ENCODE measurements at regions of chr4 and their contacts with region 1.

Region 1: GRCh38 chr4:159175085-159175988 is 72.5 kb downstream of the RAPGEF2 start:
- DNase-seq: peak; percentile 49 to 88 (median 63)
- ATAC-seq: peak; percentile 93
- H3K4me3 ChIP-seq: no peak overlapping the region
- H3K27ac ChIP-seq: no peak overlapping the region; the same call in 2 of the 3 replicates
- H3K4me1 ChIP-seq: peaks cover 3 to 23% of the 10 kb centered on the region in 2 experiments; a peak in 3 of 5 replicates
- H3K27me3 ChIP-seq: no peaks in the 10 kb centered on the region
- CTCF ChIP-seq: peak; percentile 78 to 86 (median 80)
- EP300 ChIP-seq: peak; percentile 24
- POLR2A ChIP-seq: no peak
- RAD21 ChIP-seq: peak; percentile 87 to 88

Region 2: DNA sequence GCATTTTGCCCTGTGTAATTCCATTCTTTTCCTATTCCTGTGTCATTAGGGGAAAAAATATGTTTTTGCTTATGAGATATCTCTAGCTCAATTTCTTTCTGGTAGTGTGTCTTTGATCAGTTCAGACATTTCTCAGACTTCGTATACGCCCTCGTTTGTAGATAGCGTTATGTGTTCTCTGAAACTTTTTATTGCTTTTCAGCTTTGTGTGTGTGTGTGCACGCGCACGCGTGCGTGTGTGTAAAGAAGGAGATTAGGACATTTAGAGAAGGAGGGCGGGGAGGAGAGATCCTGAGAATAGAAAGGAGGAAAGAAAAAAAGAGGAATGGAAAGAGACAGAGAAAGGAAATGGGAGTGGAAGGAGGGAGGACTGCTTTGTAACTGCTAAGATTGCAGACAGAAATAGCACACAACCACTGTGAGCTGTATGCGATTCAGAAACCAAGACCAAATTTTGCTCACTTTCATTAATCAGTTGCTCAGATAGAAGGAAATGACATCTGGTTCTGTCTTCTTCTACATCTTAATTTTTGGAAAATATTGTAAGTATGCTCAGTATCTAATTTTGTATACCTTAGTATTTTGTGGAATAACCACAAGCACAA is 653.8 kb before region 1 on chr4 and contains the start of gene RXFP1:
- CTCF ChIA-PET with region 1: no interaction called
- POLR2A ChIA-PET with region 1: no interaction called
- in situ Hi-C with region 1: no loop called
- intact Hi-C with region 1: no loop called
- DNase-seq: no peak
- ATAC-seq: peak; percentile 39; the same call in 1 of the 3 replicates
- H3K4me3 ChIP-seq: no peak within 1 kb of the TSS
- H3K27ac ChIP-seq: no peak within 1 kb of the TSS
- H3K4me1 ChIP-seq: no peaks in the 10 kb centered on the region; a peak in 2 of 5 replicates
- H3K27me3 ChIP-seq: no peaks in the 10 kb centered on the region; a peak in 1 of 5 replicates
- CTCF ChIP-seq: no peak
- EP300 ChIP-seq: no peak
- POLR2A ChIP-seq: no peak
- RAD21 ChIP-seq: no peak
- polyA plus RNA-seq, gene RXFP1: 0.03 TPM in 1 of 2 experiments, not detected in the other

Region 3: DNA sequence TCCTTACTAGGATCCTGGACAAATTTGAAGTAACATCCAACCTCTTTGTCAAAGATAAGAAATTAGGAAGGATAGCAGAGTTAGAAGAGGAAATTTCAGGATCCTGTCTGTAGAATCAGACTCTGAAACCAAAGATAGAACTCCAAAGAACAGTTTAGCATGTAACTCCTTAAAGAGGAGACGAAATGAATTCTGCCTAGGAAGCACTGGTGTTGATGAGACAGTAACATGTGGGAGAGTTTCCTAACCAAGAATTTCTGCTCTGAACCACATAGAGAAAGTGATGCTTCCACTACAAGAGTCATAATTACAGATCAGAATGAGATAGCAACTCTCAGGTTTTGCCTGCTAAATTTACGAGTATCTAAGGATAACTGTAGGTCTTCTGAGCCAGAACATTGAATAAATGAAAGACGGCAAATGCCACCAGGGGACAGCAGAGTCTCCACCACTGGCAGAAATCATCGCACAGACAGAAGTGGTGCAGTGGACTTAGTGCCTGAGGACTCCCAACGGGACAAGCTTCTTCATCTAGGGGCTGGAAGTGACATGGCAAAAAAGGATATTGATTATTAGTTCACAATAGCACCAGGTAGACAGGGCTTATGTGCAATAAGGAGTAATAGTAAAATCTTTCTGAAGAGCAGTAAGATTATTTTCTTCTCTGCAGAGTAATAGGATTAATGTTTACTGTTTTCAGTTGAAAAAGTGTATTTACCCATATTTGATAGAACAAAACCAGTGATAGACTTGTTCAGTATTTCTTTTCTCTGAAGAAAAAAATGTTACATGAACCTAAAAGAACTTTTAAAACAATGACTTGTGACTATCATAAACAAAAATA is 445.4 kb before region 1 on chr4:
- CTCF ChIA-PET with region 1: no interaction called
- POLR2A ChIA-PET with region 1: no interaction called
- in situ Hi-C with region 1: loop called (anchors 10 kb)
- intact Hi-C with region 1: loop called (anchors 1 kb)
- DNase-seq: peak in 2 of 4 experiments; percentile 59 to 70
- ATAC-seq: peak; percentile 97
- H3K4me3 ChIP-seq: no peak overlapping the region
- H3K27ac ChIP-seq: no peak overlapping the region
- H3K4me1 ChIP-seq: no peaks in the 10 kb centered on the region; a peak in 2 of 5 replicates
- H3K27me3 ChIP-seq: no peaks in the 10 kb centered on the region
- CTCF ChIP-seq: peak; percentile 83 to 88 (median 86)
- EP300 ChIP-seq: no peak
- POLR2A ChIP-seq: no peak
- RAD21 ChIP-seq: peak; percentile 79 to 85

Region 4: DNA sequence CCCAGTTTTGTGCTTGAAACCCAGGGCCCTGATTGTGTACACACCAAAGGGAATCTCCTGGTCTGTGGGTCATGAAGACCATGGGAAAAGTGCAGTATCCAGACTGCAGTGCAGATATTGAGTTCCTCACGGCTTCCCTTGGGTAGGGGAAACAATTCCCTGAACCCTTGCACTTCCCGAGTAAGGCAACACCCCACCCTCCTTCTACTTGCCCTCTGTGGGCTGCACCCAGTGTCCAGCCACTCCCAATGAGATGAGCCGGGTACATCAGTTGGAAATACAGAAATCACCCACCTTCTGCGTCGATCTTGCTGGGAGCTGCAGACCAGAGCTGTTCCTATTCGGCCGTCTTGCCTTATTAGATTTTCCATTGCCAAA is 272.3 kb before region 1 on chr4:
- CTCF ChIA-PET with region 1: no interaction called
- POLR2A ChIA-PET with region 1: no interaction called
- in situ Hi-C with region 1: no loop called
- intact Hi-C with region 1: loop called (anchors 5 kb)
- DNase-seq: no peak
- ATAC-seq: peak; percentile 52
- H3K4me3 ChIP-seq: no peak overlapping the region
- H3K27ac ChIP-seq: peak overlapping the region; percentile 83
- H3K4me1 ChIP-seq: peaks cover 7 to 13% of the 10 kb centered on the region in 2 experiments; a peak in 4 of 5 replicates
- H3K27me3 ChIP-seq: no peaks in the 10 kb centered on the region
- CTCF ChIP-seq: no peak
- EP300 ChIP-seq: no peak
- POLR2A ChIP-seq: no peak
- RAD21 ChIP-seq: no peak

Region 5: DNA sequence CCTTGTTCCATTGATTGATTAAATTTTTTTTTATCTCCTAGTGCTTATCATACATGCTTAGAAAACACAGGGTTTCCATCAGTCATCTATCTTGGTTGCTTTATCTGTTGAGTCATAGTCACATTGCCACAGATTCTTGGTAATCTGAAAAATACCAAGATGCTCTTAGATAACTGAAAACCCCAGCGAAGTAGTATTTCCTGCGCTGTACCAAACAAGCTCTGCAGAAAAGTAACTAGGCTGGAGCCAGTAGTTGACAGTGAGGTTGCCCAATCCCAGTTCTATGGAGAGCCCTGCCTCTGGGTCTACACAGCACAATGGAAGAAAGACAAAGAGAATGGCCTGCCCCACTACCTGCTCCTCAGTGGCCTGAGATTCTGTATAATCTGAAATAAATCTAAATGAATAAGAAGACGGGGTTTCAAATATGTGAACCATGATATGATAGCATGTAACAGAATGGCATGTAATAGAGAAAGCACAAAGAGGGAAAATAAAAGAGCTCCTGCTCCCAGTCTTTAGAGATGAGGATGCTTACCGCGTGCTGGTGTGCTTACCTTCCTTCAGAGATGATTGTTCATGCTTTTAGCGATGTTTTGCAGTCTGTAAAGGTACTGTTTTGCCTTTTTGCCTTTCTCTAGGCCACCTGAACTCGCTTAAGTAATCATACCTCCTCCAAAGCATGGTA is 127.7 kb before region 1 on chr4:
- CTCF ChIA-PET with region 1: no interaction called
- POLR2A ChIA-PET with region 1: no interaction called
- in situ Hi-C with region 1: no loop called
- intact Hi-C with region 1: loop called (anchors 2 kb)
- DNase-seq: peak; percentile 15 to 64 (median 28)
- ATAC-seq: peak; percentile 69
- H3K4me3 ChIP-seq: no peak overlapping the region
- H3K27ac ChIP-seq: peak overlapping the region; percentile 63
- H3K4me1 ChIP-seq: peaks cover 25 to 40% of the 10 kb centered on the region in 2 experiments
- H3K27me3 ChIP-seq: no peaks in the 10 kb centered on the region
- CTCF ChIP-seq: no peak
- EP300 ChIP-seq: peak; percentile 94
- POLR2A ChIP-seq: no peak
- RAD21 ChIP-seq: no peak

Region 6: GRCh38 chr4:159097785-159098184 is 77.6 kb before region 1 on chr4:
- CTCF ChIA-PET with region 1: no interaction called
- POLR2A ChIA-PET with region 1: no interaction called
- in situ Hi-C with region 1: no loop called
- intact Hi-C with region 1: no loop called
- DNase-seq: no peak
- ATAC-seq: no peak
- H3K4me3 ChIP-seq: no peak overlapping the region
- H3K27ac ChIP-seq: no peak overlapping the region
- H3K4me1 ChIP-seq: peaks cover 6 to 14% of the 10 kb centered on the region in 2 experiments; a peak in 4 of 5 replicates
- H3K27me3 ChIP-seq: no peaks in the 10 kb centered on the region
- CTCF ChIP-seq: no peak
- EP300 ChIP-seq: no peak
- POLR2A ChIP-seq: no peak
- RAD21 ChIP-seq: no peak

Region 7: DNA sequence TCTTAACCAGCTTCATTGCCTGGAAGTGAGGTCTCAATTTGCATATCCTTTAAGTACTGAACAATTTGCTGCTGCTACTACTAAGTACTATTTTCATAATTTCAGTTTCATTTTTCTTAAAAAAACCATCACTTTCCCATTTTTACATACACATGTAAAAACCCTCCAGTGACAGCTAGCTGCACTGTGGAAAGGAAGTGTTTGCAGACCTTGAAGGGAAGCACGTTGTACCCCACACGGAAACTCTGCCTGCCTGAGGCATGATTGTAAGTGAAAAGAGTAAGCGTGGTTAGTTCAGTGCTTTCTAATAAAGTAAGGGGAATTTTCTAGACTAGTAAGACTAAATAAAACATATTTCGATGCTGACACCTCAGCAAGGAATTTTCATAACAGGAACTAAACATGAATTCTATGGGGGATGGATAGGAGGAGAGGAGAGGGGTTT is 31.1 kb after region 1 on chr4:
- CTCF ChIA-PET with region 1: interaction called, 3 read pairs
- POLR2A ChIA-PET with region 1: no interaction called
- in situ Hi-C with region 1: no loop called
- intact Hi-C with region 1: loop called (anchors 1 kb)
- DNase-seq: no peak
- ATAC-seq: no peak
- H3K4me3 ChIP-seq: no peak overlapping the region
- H3K27ac ChIP-seq: no peak overlapping the region
- H3K4me1 ChIP-seq: no peaks in the 10 kb centered on the region; a peak in 1 of 5 replicates
- H3K27me3 ChIP-seq: no peaks in the 10 kb centered on the region
- CTCF ChIP-seq: no peak
- EP300 ChIP-seq: no peak
- POLR2A ChIP-seq: no peak
- RAD21 ChIP-seq: no peak

Region 8: DNA sequence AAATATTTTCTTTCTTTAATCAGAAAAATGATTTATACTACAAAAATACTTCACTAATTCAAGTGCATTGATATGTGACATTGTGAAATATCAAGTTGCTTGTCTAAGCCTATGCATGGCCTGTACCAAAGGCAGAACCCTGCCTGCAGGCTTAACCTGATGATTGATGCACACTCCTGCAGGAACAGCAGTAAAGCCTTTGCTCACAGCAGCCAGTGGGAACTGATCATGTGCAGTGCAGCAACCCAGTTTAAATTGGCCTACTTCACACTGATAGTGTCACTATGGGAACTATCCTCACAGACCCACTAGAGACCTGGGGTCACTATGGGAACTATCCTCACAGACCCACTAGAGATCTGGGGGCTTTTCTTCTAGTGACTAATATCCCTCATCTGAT is 531.4 kb after region 1 on chr4:
- CTCF ChIA-PET with region 1: no interaction called
- POLR2A ChIA-PET with region 1: no interaction called
- in situ Hi-C with region 1: no loop called
- intact Hi-C with region 1: no loop called
- DNase-seq: no peak
- ATAC-seq: no peak
- H3K4me3 ChIP-seq: no peak overlapping the region
- H3K27ac ChIP-seq: no peak overlapping the region
- H3K4me1 ChIP-seq: no peaks in the 10 kb centered on the region
- H3K27me3 ChIP-seq: no peaks in the 10 kb centered on the region
- CTCF ChIP-seq: no peak
- EP300 ChIP-seq: no peak
- POLR2A ChIP-seq: no peak
- RAD21 ChIP-seq: no peak

Measured in K562 (cell line).